ENCODE measurements at regions of chr9 and their contacts with region 1.

Region 1: DNA sequence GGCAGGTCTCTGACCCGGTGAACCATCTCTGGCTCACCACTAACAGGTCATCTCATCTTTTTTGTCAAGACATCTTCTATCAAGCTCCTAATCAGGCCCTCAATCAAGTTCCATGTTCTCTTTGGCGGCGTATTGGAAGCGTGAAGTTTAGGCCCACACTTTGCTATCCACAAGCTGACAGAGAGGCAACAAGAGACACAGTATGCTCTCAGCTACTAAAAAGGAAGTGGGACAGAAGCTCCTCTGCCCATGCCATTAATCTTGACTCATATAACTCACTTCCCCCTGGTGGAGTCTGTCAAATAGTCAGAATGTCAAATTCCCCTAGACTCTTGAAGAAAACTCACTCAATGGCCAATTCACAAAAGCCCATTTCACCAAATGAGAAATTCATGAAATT is 77.6 kb upstream of the TMC1 start:
- DNase-seq: peak; percentile 86 to 95 (median 94)
- H3K4me3 ChIP-seq: peak overlapping the region in 1 of 3 experiments; percentile 54
- H3K4me3 Mint-ChIP-seq: no peak overlapping the region
- H3K27ac ChIP-seq: peak overlapping the region; percentile 79 to 90
- H3K27ac Mint-ChIP-seq: peak overlapping the region; percentile 93 to 98 (median 97)
- H3K4me1 ChIP-seq: peaks cover 82 to 84% of the 10 kb centered on the region in 2 donors
- H3K4me1 Mint-ChIP-seq: peaks cover 74% of the 10 kb centered on the region
- H3K27me3 ChIP-seq: no peaks in the 10 kb centered on the region
- H3K27me3 Mint-ChIP-seq: no peaks in the 10 kb centered on the region
- CTCF ChIP-seq: peak; percentile 25

Region 2: GRCh38 chr9:72292256-72292682 is 151.6 kb before region 1 on chr9:
- intact Hi-C with region 1: loop called (anchors 5 to 10 kb)
- DNase-seq: peak; percentile 38 to 68 (median 53)
- H3K4me3 ChIP-seq: peak overlapping the region in 2 of 3 experiments; percentile 27 to 50
- H3K4me3 Mint-ChIP-seq: peak overlapping the region; percentile 1 to 56
- H3K27ac ChIP-seq: peak overlapping the region; percentile 1 to 85
- H3K27ac Mint-ChIP-seq: peak overlapping the region; percentile 85 to 94 (median 91)
- H3K4me1 ChIP-seq: peaks cover 43 to 49% of the 10 kb centered on the region in 2 donors
- H3K4me1 Mint-ChIP-seq: peaks cover 42% of the 10 kb centered on the region
- H3K27me3 ChIP-seq: no peaks in the 10 kb centered on the region
- H3K27me3 Mint-ChIP-seq: peaks cover 0 to 1% (median 0%) of the 10 kb centered on the region in 3 donors
- CTCF ChIP-seq: peak; percentile 80

Region 3: GRCh38 chr9:72509635-72510034 is 65.8 kb after region 1 on chr9:
- intact Hi-C with region 1: loop called in 1 of 2 experiments (anchors 5 kb)
- DNase-seq: peak in 2 of 3 donors; percentile 56 to 59
- H3K4me3 ChIP-seq: no peak overlapping the region
- H3K4me3 Mint-ChIP-seq: no peak overlapping the region
- H3K27ac ChIP-seq: no peak overlapping the region
- H3K27ac Mint-ChIP-seq: peak overlapping the region in 3 of 7 donors; percentile 10 to 71 (median 10)
- H3K4me1 ChIP-seq: peaks cover 9% of the 10 kb centered on the region in 2 donors
- H3K4me1 Mint-ChIP-seq: peaks cover 25% of the 10 kb centered on the region
- H3K27me3 ChIP-seq: no peaks in the 10 kb centered on the region
- H3K27me3 Mint-ChIP-seq: peaks cover 0 to 3% (median 0%) of the 10 kb centered on the region in 3 donors
- CTCF ChIP-seq: no peak

Region 4: DNA sequence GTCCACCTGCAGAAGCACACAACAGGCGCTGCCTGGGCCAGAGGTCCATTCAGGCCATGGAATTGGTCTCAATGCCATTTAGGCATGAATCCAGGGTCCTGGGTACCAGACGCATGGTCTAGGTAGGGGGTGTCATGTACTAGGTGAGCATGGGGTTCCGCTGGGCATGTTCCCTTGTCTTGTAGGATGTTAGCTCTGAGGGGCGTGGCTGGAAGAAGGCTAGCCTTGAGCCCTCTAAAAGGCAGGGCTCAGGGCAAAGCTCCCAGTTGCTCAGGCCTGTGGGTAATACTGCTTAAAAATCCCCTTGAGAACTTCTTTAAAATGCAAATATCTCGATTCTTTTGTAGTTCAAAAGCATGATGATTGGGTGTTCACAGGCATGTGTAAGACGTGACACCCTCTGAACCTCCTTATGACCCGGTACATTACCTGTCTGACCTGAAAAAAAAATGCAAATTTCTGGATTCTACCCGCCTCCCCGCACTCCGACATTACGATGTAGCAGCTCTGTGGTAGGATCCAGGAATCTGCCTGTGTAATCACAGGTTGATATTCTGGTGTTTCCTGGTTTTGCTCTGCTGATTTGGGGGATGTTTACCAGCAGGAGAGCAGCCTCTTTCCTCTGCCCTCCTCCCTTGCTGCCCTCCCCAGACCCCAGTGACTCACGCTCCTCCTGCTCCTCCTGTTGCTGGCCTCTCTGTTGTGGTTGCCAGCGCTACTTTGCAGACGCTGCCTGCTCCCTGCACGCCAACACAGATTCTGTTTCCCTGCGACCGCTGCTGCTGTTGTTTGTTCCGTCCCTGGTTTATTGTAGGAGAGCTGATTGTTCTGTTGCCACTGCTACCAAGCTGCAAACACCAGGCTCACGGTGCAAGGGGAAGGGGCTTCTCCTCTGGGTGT is 83.3 kb after region 1 on chr9:
- intact Hi-C with region 1: loop called in 1 of 2 experiments (anchors 5 kb)
- DNase-seq: peak; percentile 85 to 92 (median 85)
- H3K4me3 ChIP-seq: peak overlapping the region; percentile 29 to 69 (median 41)
- H3K4me3 Mint-ChIP-seq: peak overlapping the region; percentile 70 to 97
- H3K27ac ChIP-seq: peak overlapping the region; percentile 81 to 95
- H3K27ac Mint-ChIP-seq: peak overlapping the region; percentile 90 to 98 (median 93)
- H3K4me1 ChIP-seq: peaks cover 29 to 33% of the 10 kb centered on the region in 2 donors
- H3K4me1 Mint-ChIP-seq: peaks cover 32% of the 10 kb centered on the region
- H3K27me3 ChIP-seq: no peaks in the 10 kb centered on the region
- H3K27me3 Mint-ChIP-seq: peaks cover 0 to 2% (median 0%) of the 10 kb centered on the region in 3 donors
- CTCF ChIP-seq: no peak

Region 5: DNA sequence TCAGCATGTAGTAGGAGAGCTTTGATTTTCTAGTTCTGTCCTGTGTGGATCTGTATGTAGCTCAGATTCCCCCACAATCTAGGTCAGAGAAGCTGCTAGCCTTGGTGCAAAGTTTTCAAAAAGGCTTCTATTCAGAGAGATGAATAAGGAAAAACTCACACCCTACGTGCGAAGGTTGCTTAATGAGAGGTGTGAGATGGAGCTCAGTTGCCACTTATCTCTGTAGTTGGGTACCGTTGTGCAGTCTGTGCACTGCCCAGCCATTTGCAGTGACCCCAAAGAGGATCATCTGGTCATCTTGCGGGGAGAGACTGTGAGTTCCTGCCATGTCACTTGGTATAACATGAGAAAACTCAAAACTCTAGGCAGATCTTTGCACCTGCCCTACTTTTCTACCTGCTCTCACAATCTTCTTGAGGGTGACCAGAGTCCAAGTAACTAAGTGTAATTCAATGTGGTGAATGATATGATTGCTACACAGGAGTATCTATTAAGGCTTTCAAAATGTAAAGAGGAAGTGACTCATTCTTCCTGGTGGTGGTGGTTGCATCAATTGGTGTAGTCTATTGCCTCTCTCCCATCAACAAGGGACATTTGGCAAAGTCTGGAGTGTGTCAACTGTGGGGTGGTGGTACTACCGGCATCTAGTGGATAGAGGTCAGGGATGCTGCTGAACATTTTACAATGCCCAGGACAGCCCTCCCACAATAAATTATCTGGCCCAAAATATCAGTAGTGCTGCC is 142.7 kb after region 1 on chr9:
- intact Hi-C with region 1: loop called (anchors 2 to 5 kb)
- DNase-seq: peak; percentile 91 to 98 (median 98)
- H3K4me3 ChIP-seq: peak overlapping the region in 1 of 3 experiments; percentile 37
- H3K4me3 Mint-ChIP-seq: peak overlapping the region; percentile 24 to 71
- H3K27ac ChIP-seq: peak overlapping the region; percentile 75
- H3K27ac Mint-ChIP-seq: peak overlapping the region; percentile 72 to 97 (median 96)
- H3K4me1 ChIP-seq: peaks cover 67 to 72% of the 10 kb centered on the region in 2 donors
- H3K4me1 Mint-ChIP-seq: peaks cover 68% of the 10 kb centered on the region
- H3K27me3 ChIP-seq: no peaks in the 10 kb centered on the region
- H3K27me3 Mint-ChIP-seq: peaks cover 0 to 4% (median 2%) of the 10 kb centered on the region in 3 donors
- CTCF ChIP-seq: peak; percentile 32

Region 6: GRCh38 chr9:72592502-72593403 is 148.9 kb after region 1 on chr9:
- intact Hi-C with region 1: loop called (anchors 2 to 5 kb)
- DNase-seq: peak; percentile 60 to 74 (median 73)
- H3K4me3 ChIP-seq: peak overlapping the region in 1 of 3 experiments; percentile 5
- H3K4me3 Mint-ChIP-seq: peak overlapping the region in 1 of 2 donors; percentile 66
- H3K27ac ChIP-seq: peak overlapping the region; percentile 51 to 71
- H3K27ac Mint-ChIP-seq: peak overlapping the region; percentile 85 to 96 (median 92)
- H3K4me1 ChIP-seq: peaks cover 72 to 77% of the 10 kb centered on the region in 2 donors
- H3K4me1 Mint-ChIP-seq: peaks cover 71% of the 10 kb centered on the region
- H3K27me3 ChIP-seq: no peaks in the 10 kb centered on the region
- H3K27me3 Mint-ChIP-seq: peaks cover 0 to 4% (median 2%) of the 10 kb centered on the region in 3 donors
- CTCF ChIP-seq: peak; percentile 98

Region 7: GRCh38 chr9:72675586-72675985 is 231.7 kb after region 1 on chr9:
- intact Hi-C with region 1: no loop called
- DNase-seq: no peak
- H3K4me3 ChIP-seq: no peak overlapping the region
- H3K4me3 Mint-ChIP-seq: no peak overlapping the region
- H3K27ac ChIP-seq: no peak overlapping the region
- H3K27ac Mint-ChIP-seq: no peak overlapping the region
- H3K4me1 ChIP-seq: no peaks in the 10 kb centered on the region
- H3K4me1 Mint-ChIP-seq: peaks cover 2% of the 10 kb centered on the region
- H3K27me3 ChIP-seq: peaks cover 11 to 13% of the 10 kb centered on the region in 2 donors
- H3K27me3 Mint-ChIP-seq: peaks cover 4 to 17% (median 5%) of the 10 kb centered on the region in 3 donors
- CTCF ChIP-seq: no peak

Region 8: DNA sequence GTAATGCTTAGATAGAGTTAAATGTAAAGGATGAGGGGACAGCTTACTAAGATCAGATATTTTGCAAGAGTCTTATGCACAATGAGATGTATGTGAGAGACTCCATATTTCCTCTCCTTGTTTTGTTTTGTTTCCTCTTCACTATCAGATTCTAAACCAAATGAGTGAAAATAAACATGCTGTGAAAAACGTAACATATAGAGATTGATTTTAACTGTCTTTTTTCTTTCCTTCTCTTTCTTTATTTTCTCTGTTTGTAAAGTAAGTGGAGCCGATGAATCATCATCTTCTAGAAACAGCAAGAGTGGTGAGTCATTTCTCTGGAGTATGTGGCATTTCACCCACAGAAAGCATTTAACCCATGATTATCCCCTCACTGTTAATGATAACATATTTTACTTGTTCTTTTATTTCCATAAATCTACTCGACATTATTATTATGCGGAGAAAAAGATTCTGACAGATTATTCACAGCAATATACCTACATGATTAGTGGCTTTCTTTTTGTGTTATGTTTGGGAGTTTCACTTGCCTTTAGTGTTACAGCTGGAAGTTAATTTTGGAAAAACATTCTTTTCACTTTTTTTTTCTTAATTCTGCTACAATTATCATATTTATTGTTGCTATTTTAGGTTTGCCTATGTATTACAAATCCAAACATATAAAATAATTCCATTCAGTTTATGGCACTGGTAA is 705.7 kb after region 1 on chr9:
- intact Hi-C with region 1: loop called in 1 of 2 experiments (anchors 5 kb)
- DNase-seq: peak; percentile 68 to 90 (median 87)
- H3K4me3 ChIP-seq: peak overlapping the region in 2 of 3 experiments; percentile 27 to 67
- H3K4me3 Mint-ChIP-seq: peak overlapping the region in 1 of 2 donors; percentile 81
- H3K27ac ChIP-seq: peak overlapping the region in 1 of 2 donors; percentile 87
- H3K27ac Mint-ChIP-seq: peak overlapping the region; percentile 90 to 99 (median 97)
- H3K4me1 ChIP-seq: peaks cover 67 to 84% of the 10 kb centered on the region in 2 donors
- H3K4me1 Mint-ChIP-seq: peaks cover 68% of the 10 kb centered on the region
- H3K27me3 ChIP-seq: no peaks in the 10 kb centered on the region
- H3K27me3 Mint-ChIP-seq: no peaks in the 10 kb centered on the region
- CTCF ChIP-seq: no peak